ENCODE measurements at regions of chr14 and their contacts with region 1.

Region 1: GRCh38 chr14:72883961-72884360 is 9.9 kb downstream of the DPF3 start:
- DNase-seq: peak; percentile 91
- H3K4me3 ChIP-seq: no peak overlapping the region
- H3K27ac ChIP-seq: peak overlapping the region; percentile 98
- H3K4me1 ChIP-seq: peaks cover 18% of the 10 kb centered on the region
- H3K27me3 ChIP-seq: no peaks in the 10 kb centered on the region
- CTCF ChIP-seq: no peak
- POLR2A ChIP-seq: peak; percentile 67

Region 2: GRCh38 chr14:72801381-72801812 is 82.6 kb before region 1 on chr14:
- CTCF ChIA-PET with region 1: no interaction called
- POLR2A ChIA-PET with region 1: no interaction called
- dilution Hi-C with region 1: no loop called
- intact Hi-C with region 1: loop called (anchors 1 kb)
- DNase-seq: peak; percentile 93
- H3K4me3 ChIP-seq: no peak overlapping the region
- H3K27ac ChIP-seq: peak overlapping the region; percentile 95
- H3K4me1 ChIP-seq: peaks cover 22% of the 10 kb centered on the region
- H3K27me3 ChIP-seq: no peaks in the 10 kb centered on the region
- CTCF ChIP-seq: no peak
- POLR2A ChIP-seq: no peak

Region 3: GRCh38 chr14:72863216-72864006 is 20.6 kb before region 1 on chr14:
- CTCF ChIA-PET with region 1: no interaction called
- POLR2A ChIA-PET with region 1: no interaction called
- dilution Hi-C with region 1: no loop called
- intact Hi-C with region 1: no loop called
- DNase-seq: no peak
- H3K4me3 ChIP-seq: no peak overlapping the region
- H3K27ac ChIP-seq: no peak overlapping the region
- H3K4me1 ChIP-seq: peaks cover 4% of the 10 kb centered on the region
- H3K27me3 ChIP-seq: no peaks in the 10 kb centered on the region
- CTCF ChIP-seq: no peak
- POLR2A ChIP-seq: no peak

Measured in endothelial cell of umbilical vein (primary cell).